Colonic mucosa (tissue), 4 donors: ENCODE measurements at regions of chr6 and their contacts with region 1.

Region 1: DNA sequence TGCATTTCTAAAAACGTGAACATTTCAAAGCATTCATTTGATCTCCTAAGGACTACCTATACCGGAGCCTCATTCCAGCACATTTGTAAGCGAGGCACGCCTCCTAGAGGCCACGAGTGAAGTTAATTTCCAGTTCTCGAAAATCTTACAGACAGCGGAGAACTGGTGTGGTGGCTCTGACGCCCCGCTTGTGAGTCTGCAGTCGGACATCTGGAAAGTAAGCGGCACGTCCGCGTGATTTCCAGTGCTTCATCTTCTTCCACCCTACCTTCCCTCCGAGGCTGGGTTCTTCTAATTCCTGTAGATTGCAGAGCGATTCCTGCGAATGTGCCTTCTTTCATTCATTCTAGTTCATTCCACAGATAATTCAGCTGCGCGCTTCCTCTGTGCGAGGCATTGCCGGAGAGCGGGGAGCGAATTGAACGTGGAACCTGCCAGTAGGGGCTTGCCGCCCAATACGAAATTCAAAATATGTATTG is 810 bp upstream of the PRIM2 start:
- DNase-seq: peak; percentile 89
- H3K4me3 ChIP-seq: peak overlapping the region; percentile 63
- H3K27ac ChIP-seq: peak overlapping the region; percentile 67
- H3K4me1 ChIP-seq: peaks cover 4% of the 10 kb centered on the region
- H3K27me3 ChIP-seq: no peaks in the 10 kb centered on the region
- CTCF ChIP-seq: peak; percentile 68

Region 2: DNA sequence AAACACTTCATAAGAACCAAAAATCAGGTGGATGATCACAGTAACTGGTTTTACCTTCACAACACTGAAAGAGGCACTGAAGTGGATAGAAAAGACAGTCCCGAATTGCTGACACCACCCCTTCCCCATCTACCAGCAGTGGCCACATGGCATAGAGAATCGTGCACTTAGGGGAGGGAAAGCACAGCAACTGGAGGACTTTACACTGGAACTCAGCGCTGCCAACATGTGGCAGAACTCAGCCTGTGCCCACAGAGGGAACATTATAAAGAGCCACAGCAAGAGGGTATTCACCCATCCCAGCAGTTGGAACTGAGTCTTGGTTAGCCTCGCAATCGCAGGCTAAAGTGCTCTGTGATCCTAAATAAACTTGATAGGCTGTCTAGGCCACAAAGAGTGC is 276.6 kb before region 1 on chr6:
- intact Hi-C with region 1: loop called (anchors 10 kb)
- DNase-seq: no peak
- H3K4me3 ChIP-seq: no peak overlapping the region
- H3K27ac ChIP-seq: no peak overlapping the region
- H3K4me1 ChIP-seq: no peaks in the 10 kb centered on the region
- H3K27me3 ChIP-seq: no peaks in the 10 kb centered on the region
- CTCF ChIP-seq: no peak

Region 3: GRCh38 chr6:57172136-57173055 is 144.2 kb before region 1 on chr6 and contains the start of gene BAG2:
- intact Hi-C with region 1: loop called (anchors 5 kb)
- DNase-seq: peak; percentile 86
- H3K4me3 ChIP-seq: peak within 1 kb of the TSS; percentile 65
- H3K27ac ChIP-seq: peak within 1 kb of the TSS; percentile 79
- H3K4me1 ChIP-seq: no peaks in the 10 kb centered on the region
- H3K27me3 ChIP-seq: no peaks in the 10 kb centered on the region
- CTCF ChIP-seq: no peak
- total RNA-seq, gene BAG2: 1.8 to 6.3 TPM

Region 4: GRCh38 chr6:57267586-57268293 is 48.9 kb before region 1 on chr6:
- intact Hi-C with region 1: loop called (anchors 10 kb)
- DNase-seq: peak; percentile 62
- H3K4me3 ChIP-seq: no peak overlapping the region
- H3K27ac ChIP-seq: no peak overlapping the region
- H3K4me1 ChIP-seq: no peaks in the 10 kb centered on the region
- H3K27me3 ChIP-seq: no peaks in the 10 kb centered on the region
- CTCF ChIP-seq: peak; percentile 42